ENCODE measurements at regions of chr1 and their contacts with region 1.

Region 1: GRCh38 chr1:175373786-175374623 is 181.4 kb upstream of the KIAA0040 start:
- DNase-seq: peak; percentile 42
- H3K4me3 Mint-ChIP-seq: no peak overlapping the region
- H3K27ac Mint-ChIP-seq: no peak overlapping the region
- H3K4me1 Mint-ChIP-seq: no peaks in the 10 kb centered on the region
- H3K27me3 Mint-ChIP-seq: peaks cover 13% of the 10 kb centered on the region

Region 2: DNA sequence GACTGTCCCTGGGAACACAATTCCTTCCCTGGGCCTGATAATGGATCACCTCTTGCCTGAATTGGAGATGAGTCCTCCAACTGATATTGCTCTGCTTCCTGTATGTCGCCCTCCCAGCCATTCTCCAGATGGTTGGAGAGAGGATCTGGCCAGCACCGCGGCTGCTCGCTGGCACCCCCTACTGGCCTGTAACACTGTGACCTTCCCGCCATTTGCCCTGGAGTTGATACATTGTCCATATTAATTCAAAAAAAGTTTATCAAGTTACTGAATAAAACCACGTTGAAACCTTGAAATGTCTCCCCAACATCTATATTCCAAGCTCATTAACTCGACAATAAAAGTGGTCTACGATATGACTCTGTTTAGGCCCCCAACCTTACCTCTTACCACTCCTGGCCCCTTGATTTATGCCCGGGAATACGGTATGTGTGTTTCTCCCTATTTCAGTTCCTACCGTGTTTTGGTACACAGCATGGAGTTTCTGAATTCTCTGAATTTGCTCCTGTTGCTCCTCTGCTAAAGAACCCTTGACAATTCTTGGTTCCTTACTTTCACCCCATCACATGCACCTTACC is 60.4 kb after region 1 on chr1:
- CTCF ChIA-PET with region 1: interaction called, 3 read pairs
- intact Hi-C with region 1: loop called (anchors 2 kb)
- DNase-seq: peak; percentile 8
- H3K4me3 Mint-ChIP-seq: no peak overlapping the region
- H3K27ac Mint-ChIP-seq: no peak overlapping the region
- H3K4me1 Mint-ChIP-seq: no peaks in the 10 kb centered on the region
- H3K27me3 Mint-ChIP-seq: peaks cover 30% of the 10 kb centered on the region

Region 3: GRCh38 chr1:175618559-175618958 is 244.6 kb after region 1 on chr1:
- CTCF ChIA-PET with region 1: no interaction called
- intact Hi-C with region 1: no loop called
- DNase-seq: peak; percentile 34
- H3K4me3 Mint-ChIP-seq: no peak overlapping the region
- H3K27ac Mint-ChIP-seq: no peak overlapping the region
- H3K4me1 Mint-ChIP-seq: peaks cover 14% of the 10 kb centered on the region
- H3K27me3 Mint-ChIP-seq: peaks cover 2% of the 10 kb centered on the region

Region 4: GRCh38 chr1:175628548-175629317 is 254.7 kb after region 1 on chr1:
- CTCF ChIA-PET with region 1: no interaction called
- intact Hi-C with region 1: no loop called
- DNase-seq: no peak
- H3K4me3 Mint-ChIP-seq: no peak overlapping the region
- H3K27ac Mint-ChIP-seq: no peak overlapping the region
- H3K4me1 Mint-ChIP-seq: no peaks in the 10 kb centered on the region
- H3K27me3 Mint-ChIP-seq: peaks cover 7% of the 10 kb centered on the region

Region 5: GRCh38 chr1:176073524-176074157 is 699.6 kb after region 1 on chr1:
- CTCF ChIA-PET with region 1: no interaction called
- intact Hi-C with region 1: loop called (anchors 2 kb)
- DNase-seq: peak; percentile 47
- H3K4me3 Mint-ChIP-seq: no peak overlapping the region
- H3K27ac Mint-ChIP-seq: no peak overlapping the region
- H3K4me1 Mint-ChIP-seq: peaks cover 3% of the 10 kb centered on the region
- H3K27me3 Mint-ChIP-seq: no peaks in the 10 kb centered on the region

Region 6: GRCh38 chr1:176691251-176692228 is 1317.5 kb after region 1 on chr1:
- CTCF ChIA-PET with region 1: no interaction called
- intact Hi-C with region 1: loop called (anchors 5 kb)
- DNase-seq: peak; percentile 21
- H3K4me3 Mint-ChIP-seq: no peak overlapping the region
- H3K27ac Mint-ChIP-seq: no peak overlapping the region
- H3K4me1 Mint-ChIP-seq: no peaks in the 10 kb centered on the region
- H3K27me3 Mint-ChIP-seq: no peaks in the 10 kb centered on the region

Region 7: DNA sequence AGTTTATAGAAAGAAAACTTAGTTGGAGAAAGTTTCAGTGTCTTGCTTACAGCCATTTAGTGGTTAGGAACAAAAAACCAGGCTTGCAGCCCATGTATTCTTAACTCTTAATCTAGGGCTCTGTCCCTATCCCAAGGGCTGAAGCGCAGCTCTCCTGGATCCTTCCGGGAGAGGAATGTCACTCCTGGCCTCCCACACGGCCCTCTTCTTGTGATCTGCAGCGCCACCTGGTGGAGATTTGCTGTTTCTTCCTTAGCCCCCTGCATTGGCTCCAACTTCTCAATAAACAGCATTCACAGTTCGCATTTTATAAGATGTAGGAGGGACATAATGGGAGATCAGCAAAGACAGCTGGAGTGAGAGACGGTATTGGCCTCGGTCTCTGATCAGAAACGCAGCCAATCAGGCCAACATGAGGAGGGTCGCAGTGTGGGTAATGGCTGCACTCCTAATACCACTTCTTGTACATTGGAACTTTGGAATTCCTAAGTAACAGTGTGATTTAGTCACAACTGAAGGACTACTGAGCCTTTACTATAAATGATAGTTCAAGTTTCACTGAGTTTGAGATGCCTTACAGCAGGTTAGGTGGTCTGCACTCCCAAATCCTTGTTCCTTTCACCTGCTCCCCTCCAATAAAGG is 1507.1 kb after region 1 on chr1:
- CTCF ChIA-PET with region 1: no interaction called
- intact Hi-C with region 1: loop called (anchors 5 kb)
- DNase-seq: peak; percentile 65
- H3K4me3 Mint-ChIP-seq: no peak overlapping the region
- H3K27ac Mint-ChIP-seq: no peak overlapping the region
- H3K4me1 Mint-ChIP-seq: no peaks in the 10 kb centered on the region
- H3K27me3 Mint-ChIP-seq: no peaks in the 10 kb centered on the region

Measured in activated naive CD4-positive, alpha-beta T cell treated with anti-CD3 and anti-CD28 coated beads for 36 hours (primary cell).